ENCODE measurements at regions of chr16 and their contacts with region 1.

Region 1: DNA sequence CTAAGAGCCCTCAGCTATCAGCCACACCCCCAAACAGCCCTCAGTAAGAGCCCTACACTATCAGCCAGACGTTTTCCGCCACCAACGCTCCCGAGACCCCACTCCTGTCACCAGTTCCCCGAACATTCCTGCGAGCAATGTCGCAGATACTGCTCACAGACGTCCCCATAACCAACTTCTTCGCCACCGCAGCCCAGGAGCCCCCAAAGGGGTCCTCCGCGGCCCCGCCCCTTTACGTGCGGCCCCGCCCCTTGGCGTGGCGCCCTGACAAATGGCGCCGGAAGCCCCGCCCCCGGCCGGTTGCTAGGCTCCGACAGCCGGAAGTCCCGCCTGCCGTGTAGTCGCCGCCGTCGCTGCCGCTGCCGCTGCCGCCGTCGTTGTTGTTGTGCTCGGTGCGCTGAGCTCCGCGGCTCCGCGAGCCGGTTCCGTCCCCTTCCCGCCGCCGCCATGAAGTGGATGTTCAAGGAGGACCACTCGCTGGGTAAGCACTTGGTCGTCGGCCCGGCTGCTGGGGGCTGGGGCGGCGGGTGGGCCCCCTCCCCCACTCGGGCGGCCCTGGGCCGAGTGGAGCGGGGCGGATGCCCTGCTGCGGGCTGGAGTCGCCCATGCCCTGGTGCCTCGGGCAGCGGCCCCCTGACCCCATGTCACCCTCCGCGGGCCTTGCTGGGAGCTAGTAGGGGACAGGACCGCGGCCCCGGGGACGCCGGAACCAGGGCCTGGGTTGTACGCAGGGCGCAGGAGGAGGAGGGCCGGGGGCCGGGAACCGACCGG is at the start of gene GABARAPL2:
- DNase-seq: peak; percentile 84
- H3K4me3 ChIP-seq: peak within 1 kb of the TSS; percentile 48 to 83 (median 79)
- H3K27ac ChIP-seq: no peak within 1 kb of the TSS
- H3K4me1 ChIP-seq: peaks cover 9% of the 10 kb centered on the region
- H3K27me3 ChIP-seq: peaks cover 7 to 24% of the 10 kb centered on the region in 2 experiments
- CTCF ChIP-seq: no peak
- POLR2A ChIP-seq: peak; percentile 66
- total RNA-seq, gene GABARAPL2: 77.9 and 82.5 TPM in 2 replicates

Region 2: DNA sequence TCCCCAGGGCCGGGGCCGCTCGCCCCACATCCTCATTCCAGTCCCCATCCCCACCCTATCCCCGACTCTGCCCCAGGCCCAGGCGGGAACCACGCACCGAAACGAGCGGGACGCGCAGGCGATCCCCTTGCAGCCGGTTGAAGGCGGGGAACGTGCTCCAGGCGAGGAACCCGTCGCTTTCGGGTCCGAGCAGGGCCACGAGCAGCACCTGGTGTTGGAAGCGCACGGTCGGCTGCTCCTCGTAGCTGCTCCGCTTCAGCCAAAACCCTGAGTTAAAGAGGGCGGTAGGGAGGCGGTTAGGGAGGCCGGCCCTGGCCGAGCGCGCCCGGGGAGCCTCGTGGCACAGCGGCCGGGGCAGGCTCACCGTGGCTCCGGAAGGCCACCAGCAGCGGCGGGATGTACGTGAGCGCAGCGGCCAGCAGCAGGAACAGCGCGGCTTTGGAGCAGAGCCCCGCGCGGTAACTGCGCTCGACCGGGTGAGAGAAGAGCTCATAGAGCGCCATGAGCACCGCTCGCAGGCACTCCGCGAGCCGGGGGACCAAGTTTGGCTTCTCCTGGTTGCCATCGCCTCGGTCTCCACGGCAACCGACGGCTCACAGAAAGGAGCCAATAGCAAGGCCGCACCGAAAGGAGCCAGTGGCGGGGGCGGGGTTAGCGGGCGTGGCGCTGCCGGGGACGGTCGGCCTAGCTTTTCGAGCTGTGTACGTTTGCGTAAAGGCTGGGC is 10.4 kb before region 1 on chr16 and contains the start of gene TMEM231:
- CTCF ChIA-PET with region 1: interaction called, 3 read pairs
- POLR2A ChIA-PET with region 1: interaction called, 4 read pairs
- dilution Hi-C with region 1: no loop called
- intact Hi-C with region 1: loop called (anchors 1 kb)
- DNase-seq: peak; percentile 91
- H3K4me3 ChIP-seq: peak within 1 kb of the TSS; percentile 75 to 86 (median 80)
- H3K27ac ChIP-seq: peak within 1 kb of the TSS; percentile 46
- H3K4me1 ChIP-seq: peaks cover 12% of the 10 kb centered on the region
- H3K27me3 ChIP-seq: peaks cover 9 to 14% of the 10 kb centered on the region in 2 experiments
- CTCF ChIP-seq: no peak
- POLR2A ChIP-seq: no peak
- total RNA-seq, gene TMEM231: 9.4 and 10.0 TPM in 2 replicates

Region 3: DNA sequence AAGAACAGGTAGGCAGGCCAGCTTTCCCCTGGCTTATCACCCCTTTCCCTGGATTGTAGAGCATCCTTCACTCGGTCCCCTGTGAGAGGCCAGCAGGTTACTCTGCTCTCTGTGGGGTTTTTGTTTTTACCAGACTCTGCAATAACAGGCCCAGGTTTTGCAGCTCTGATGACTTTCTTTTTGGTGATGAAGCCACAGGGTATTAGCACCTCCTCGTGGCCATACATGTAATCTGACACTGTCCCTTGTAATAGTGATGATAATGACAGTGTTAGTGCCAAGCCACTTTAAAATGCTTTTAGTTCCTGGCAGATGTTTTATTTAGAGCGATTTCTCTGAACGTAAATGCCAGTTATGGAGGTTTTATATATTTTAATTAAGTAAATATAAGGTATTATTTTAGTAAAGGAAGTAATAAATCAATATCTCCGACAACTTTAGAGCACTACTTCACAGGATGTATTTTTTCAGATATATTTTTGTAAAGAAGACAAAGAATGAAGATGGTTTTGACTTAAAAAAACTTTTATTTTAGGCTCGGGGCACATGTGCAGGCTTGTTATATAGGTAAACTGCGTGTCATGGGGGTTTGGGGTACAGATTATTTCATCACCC is 198.0 kb after region 1 on chr16:
- CTCF ChIA-PET with region 1: no interaction called
- POLR2A ChIA-PET with region 1: no interaction called
- dilution Hi-C with region 1: no loop called
- intact Hi-C with region 1: loop called (anchors 5 kb)
- DNase-seq: peak; percentile 64
- H3K4me3 ChIP-seq: no peak overlapping the region
- H3K27ac ChIP-seq: no peak overlapping the region
- H3K4me1 ChIP-seq: no peaks in the 10 kb centered on the region
- H3K27me3 ChIP-seq: peaks cover 0 to 4% of the 10 kb centered on the region in 2 experiments
- CTCF ChIP-seq: peak; percentile 60 to 68
- POLR2A ChIP-seq: no peak

Measured in endothelial cell of umbilical vein (primary cell).